ENCODE measurements at regions of chr9 and their contacts with region 1.

Region 1: GRCh38 chr9:108272349-108272899 is 583.4 kb downstream of the ACTL7B start:
- DNase-seq: no peak
- ATAC-seq: peak; percentile 68

Region 2: DNA sequence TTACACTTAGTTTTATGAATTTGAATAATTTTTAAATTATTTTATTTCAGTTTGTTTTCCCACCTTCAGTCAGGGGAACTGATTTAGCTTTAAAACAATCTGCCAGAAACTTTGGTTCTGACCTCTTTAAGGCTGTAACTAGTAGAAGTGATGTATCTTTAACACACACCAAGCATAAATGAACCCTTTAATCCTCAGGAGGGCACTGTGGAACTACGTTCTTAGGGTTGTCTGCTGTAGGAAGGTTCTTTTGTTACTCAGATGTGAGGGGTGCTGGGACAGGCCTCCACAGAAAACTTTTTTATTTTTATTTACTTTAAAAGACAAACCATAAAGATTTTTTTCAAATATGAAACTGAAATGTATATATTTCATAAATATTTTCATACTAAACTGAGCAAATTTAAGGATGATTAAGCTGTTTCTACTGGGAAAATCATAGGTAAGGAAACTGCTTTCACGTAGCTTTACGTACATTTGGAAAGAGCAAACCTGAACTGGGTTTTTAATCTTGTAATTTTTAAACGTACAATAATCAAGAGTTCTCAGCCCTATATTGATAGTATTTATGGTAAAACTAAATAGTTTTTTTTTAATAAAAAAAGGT is 788.2 kb before region 1 on chr9:
- intact Hi-C with region 1: loop called (anchors 2 kb)
- DNase-seq: no peak
- ATAC-seq: peak; percentile 48

Region 3: GRCh38 chr9:107637421-107638420 is 634.7 kb before region 1 on chr9:
- intact Hi-C with region 1: loop called (anchors 10 kb)
- DNase-seq: peak; percentile 94
- ATAC-seq: peak; percentile 94

Region 4: DNA sequence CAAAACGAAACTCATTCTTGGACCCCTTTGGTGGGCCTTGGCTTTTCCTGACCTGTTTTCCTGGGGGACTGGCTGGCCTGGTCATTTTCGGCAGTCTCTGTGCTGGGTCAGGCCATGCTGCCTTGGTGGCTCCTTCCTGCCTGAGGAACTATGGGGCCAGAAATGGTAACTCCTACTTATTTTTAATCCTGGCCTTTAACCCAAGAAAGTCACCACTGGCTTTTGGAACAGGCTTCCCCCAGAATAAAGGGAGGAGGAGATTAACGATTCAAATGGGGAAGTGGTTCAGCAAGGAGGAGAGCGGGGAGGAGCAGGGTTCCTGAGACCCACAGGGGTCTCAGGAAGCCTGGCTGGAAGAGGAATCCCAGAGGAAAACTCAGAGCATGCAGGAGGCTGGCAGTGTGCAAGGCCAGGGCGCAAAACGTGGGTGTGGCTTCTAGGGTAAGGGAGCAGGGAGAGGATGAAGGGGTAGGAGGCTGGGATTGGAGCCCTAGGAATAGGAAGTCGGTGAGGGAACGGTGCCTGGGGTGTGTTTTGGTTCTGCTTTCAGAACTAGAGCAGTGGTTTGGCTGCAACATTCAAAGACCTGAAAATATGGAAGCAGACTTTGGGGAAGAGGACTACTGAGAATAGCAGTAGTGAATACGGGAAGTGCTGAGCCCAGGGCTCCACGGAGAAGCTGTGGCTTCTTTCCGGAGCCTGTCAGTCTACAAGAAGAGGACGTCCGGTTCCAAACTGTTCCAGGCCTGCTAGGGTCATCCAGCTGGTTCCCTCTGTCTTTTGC is 511.8 kb before region 1 on chr9:
- intact Hi-C with region 1: loop called (anchors 10 kb)
- DNase-seq: peak; percentile 80
- ATAC-seq: peak; percentile 86

Region 5: GRCh38 chr9:107976765-107977164 is 295.7 kb before region 1 on chr9:
- intact Hi-C with region 1: loop called (anchors 10 kb)
- DNase-seq: peak; percentile 79
- ATAC-seq: peak; percentile 98

Region 6: GRCh38 chr9:108150736-108151586 is 121.5 kb before region 1 on chr9:
- intact Hi-C with region 1: loop called (anchors 10 kb)
- DNase-seq: no peak
- ATAC-seq: peak; percentile 89

Region 7: GRCh38 chr9:108565651-108566378 is 293.4 kb after region 1 on chr9:
- intact Hi-C with region 1: loop called (anchors 10 kb)
- DNase-seq: no peak
- ATAC-seq: peak; percentile 89